ENCODE measurements at regions of chr14 and their contacts with region 1.

Region 1: GRCh38 chr14:76591266-76591665 is 170.0 kb upstream of the VASH1 start:
- DNase-seq: no peak
- ATAC-seq: no peak
- H3K4me3 ChIP-seq: no peak overlapping the region
- H3K27ac ChIP-seq: no peak overlapping the region
- H3K4me1 ChIP-seq: no peaks in the 10 kb centered on the region
- H3K27me3 ChIP-seq: peaks cover 0 to 4% (median 0%) of the 10 kb centered on the region in 3 donors
- CTCF ChIP-seq: no peak

Region 2: DNA sequence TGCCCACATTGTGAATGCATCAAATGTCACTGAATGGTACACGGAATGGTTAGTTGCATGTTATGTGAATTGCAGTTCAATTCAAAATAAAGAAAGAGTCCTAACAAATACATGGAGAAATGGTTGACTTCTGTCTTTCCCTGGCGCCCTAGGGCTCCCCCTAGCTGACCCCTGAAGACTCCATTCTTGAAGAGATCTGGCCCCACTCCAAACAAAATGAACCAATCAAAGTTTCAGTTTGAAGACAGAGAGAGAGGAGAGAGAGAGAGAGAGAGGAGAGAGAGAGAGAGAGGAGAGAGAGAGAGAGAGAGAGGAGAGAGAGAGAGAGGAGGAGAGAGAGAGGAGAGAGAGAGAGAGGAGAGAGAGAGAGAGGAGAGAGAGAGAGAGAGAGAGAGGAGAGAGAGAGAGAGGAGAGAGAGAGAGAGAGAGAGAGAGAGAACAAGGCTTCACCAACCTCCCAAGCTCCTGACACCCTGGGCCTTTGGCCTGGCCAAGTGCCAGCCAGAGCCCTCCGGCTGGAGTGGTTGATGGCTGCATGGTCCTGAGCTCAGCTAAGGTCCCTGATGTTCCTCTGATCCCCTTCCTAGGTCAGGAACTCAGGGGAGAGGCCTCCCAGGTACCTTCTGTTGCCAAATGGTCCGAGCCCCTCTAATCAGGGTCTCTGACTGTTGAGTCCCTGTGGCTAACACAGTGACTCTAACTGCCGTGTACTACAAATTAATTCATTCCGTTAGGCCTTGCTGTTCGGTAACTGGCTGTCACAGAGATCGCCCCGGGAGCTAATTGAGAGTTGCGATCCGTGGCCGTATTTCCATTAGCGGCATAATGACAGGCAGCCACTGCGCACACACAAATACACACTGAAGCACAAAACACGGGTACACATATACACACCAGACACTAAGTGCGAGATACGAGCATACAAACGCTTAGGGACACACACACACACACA is 26.5 kb before region 1 on chr14:
- intact Hi-C with region 1: loop called in 1 of 2 experiments (anchors 1 kb)
- DNase-seq: no peak
- ATAC-seq: no peak
- H3K4me3 ChIP-seq: no peak overlapping the region
- H3K27ac ChIP-seq: no peak overlapping the region
- H3K4me1 ChIP-seq: no peaks in the 10 kb centered on the region
- H3K27me3 ChIP-seq: peaks cover 0 to 8% (median 0%) of the 10 kb centered on the region in 3 donors
- CTCF ChIP-seq: no peak

Measured in psoas muscle (tissue), 8 donors.